ENCODE measurements at regions of chr12 and their contacts with region 1.

Region 1: GRCh38 chr12:94532490-94533422 is 73.1 kb upstream of the CEP83 start:
- DNase-seq: peak; percentile 81
- ATAC-seq: peak; percentile 91
- H3K4me3 ChIP-seq: no peak overlapping the region
- H3K27ac ChIP-seq: no peak overlapping the region
- H3K4me1 ChIP-seq: no peaks in the 10 kb centered on the region
- H3K27me3 ChIP-seq: no peaks in the 10 kb centered on the region
- CTCF ChIP-seq: peak; percentile 81

Region 2: GRCh38 chr12:94092516-94093241 is 440.1 kb before region 1 on chr12:
- intact Hi-C with region 1: no loop called
- DNase-seq: no peak
- ATAC-seq: peak; percentile 55
- H3K4me3 ChIP-seq: no peak overlapping the region
- H3K27ac ChIP-seq: no peak overlapping the region
- H3K4me1 ChIP-seq: no peaks in the 10 kb centered on the region
- H3K27me3 ChIP-seq: no peaks in the 10 kb centered on the region
- CTCF ChIP-seq: no peak

Region 3: DNA sequence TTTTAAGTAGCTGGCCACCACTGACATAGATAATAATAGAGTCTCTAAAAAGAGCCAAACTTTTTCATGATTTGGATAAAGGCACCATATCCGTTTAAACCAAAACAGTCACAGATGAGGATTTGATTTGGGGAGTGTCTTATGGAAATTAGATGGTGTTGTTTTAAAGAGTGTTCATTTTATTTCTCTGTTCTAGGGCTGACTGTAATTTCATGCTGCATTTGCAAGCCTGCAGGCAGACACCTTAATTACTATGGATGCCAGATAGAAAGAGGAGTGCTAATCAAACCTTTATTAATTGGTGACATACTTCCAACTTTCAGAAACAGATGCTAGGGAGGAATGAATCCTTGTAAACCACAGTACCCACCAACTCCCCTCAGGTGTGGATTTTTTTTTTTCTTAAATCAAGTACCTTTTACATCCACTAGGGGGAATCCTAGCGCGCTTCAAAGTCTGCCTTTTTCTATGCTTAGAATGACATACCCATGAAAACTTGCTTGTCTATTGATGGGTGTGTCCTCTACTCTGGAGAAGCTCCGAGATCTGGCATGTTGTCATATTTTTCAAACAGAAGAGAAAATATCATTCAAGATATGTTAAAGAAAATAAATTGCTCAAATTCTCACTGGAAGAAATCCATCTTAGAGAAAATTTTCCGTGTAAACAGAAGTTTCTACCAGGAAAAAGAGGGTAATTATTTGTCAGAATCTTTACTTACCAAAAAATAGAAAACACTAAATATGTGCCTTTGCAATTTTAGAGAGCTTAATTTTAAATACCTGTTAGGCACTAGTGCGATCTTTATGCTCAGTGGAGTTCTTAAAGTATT is 398.6 kb before region 1 on chr12:
- intact Hi-C with region 1: loop called (anchors 5 kb)
- DNase-seq: no peak
- ATAC-seq: peak; percentile 93
- H3K4me3 ChIP-seq: no peak overlapping the region
- H3K27ac ChIP-seq: no peak overlapping the region
- H3K4me1 ChIP-seq: no peaks in the 10 kb centered on the region
- H3K27me3 ChIP-seq: no peaks in the 10 kb centered on the region
- CTCF ChIP-seq: peak; percentile 81

Measured in upper lobe of right lung (tissue), 1 donor.